ENCODE measurements at regions of chr10 and their contacts with region 1.

Region 1: DNA sequence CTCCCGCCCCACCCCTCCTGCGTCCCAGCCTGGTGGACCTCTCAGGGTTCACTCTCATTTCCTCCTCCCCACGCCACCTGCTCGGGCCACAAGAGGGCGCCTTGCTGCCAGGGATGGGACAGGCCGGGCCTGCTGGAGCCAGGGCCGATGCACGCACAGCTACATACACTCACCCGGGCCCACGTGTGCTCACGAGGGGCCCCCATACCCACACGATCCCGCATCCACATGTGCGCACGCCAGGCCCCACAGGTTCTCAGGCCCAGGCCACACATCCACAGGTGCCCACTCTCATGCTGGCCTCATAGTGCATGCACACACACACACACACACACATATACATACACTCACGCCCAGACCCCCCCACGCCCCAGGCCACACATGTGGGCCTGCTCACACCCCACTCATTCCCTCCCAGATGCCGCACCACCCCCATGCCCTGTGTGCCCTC is 68.6 kb downstream of the LHPP start:
- DNase-seq: peak; percentile 74 to 85 (median 76)
- H3K4me3 ChIP-seq: no peak overlapping the region
- H3K4me3 Mint-ChIP-seq: no peak overlapping the region
- H3K27ac ChIP-seq: no peak overlapping the region
- H3K27ac Mint-ChIP-seq: peak overlapping the region in 1 of 7 donors; percentile 66
- H3K4me1 ChIP-seq: peaks cover 13 to 22% of the 10 kb centered on the region in 2 donors
- H3K4me1 Mint-ChIP-seq: peaks cover 20% of the 10 kb centered on the region
- H3K27me3 ChIP-seq: no peaks in the 10 kb centered on the region
- H3K27me3 Mint-ChIP-seq: peaks cover 2 to 3% (median 3%) of the 10 kb centered on the region in 3 donors
- CTCF ChIP-seq: peak; percentile 83

Region 2: GRCh38 chr10:124626759-124627380 is 96.6 kb after region 1 on chr10:
- intact Hi-C with region 1: loop called in 1 of 2 experiments (anchors 10 kb)
- DNase-seq: no peak
- H3K4me3 ChIP-seq: no peak overlapping the region
- H3K4me3 Mint-ChIP-seq: no peak overlapping the region
- H3K27ac ChIP-seq: no peak overlapping the region
- H3K27ac Mint-ChIP-seq: peak overlapping the region in 2 of 7 donors; percentile 80
- H3K4me1 ChIP-seq: peaks cover 20 to 33% of the 10 kb centered on the region in 2 donors
- H3K4me1 Mint-ChIP-seq: peaks cover 37% of the 10 kb centered on the region
- H3K27me3 ChIP-seq: no peaks in the 10 kb centered on the region
- H3K27me3 Mint-ChIP-seq: no peaks in the 10 kb centered on the region
- CTCF ChIP-seq: no peak

Region 3: DNA sequence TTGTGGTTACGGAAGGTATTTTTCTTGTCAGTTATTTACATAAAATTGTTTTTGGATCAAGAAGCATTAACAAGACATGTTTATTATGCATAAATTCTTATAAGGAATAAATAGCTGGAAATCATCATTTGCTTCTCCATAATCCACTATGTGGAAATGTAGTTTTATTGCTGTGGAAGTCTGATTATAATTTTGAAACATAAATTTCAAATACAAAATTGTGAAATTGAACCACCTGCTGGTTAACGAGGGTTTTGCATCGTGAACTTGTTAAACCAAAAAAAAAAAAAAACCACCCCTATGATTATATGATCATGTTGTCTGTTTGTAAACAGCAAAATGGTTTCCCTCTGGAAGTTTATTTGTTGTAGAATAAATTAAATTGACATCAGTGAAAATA is 297.2 kb after region 1 on chr10:
- intact Hi-C with region 1: loop called (anchors 5 to 10 kb)
- DNase-seq: peak in 1 of 3 donors; percentile 6
- H3K4me3 ChIP-seq: no peak overlapping the region
- H3K4me3 Mint-ChIP-seq: no peak overlapping the region
- H3K27ac ChIP-seq: no peak overlapping the region
- H3K27ac Mint-ChIP-seq: no peak overlapping the region
- H3K4me1 ChIP-seq: no peaks in the 10 kb centered on the region
- H3K4me1 Mint-ChIP-seq: no peaks in the 10 kb centered on the region
- H3K27me3 ChIP-seq: no peaks in the 10 kb centered on the region
- H3K27me3 Mint-ChIP-seq: no peaks in the 10 kb centered on the region
- CTCF ChIP-seq: peak; percentile 73